ENCODE measurements at regions of chr4 and their contacts with region 1.

Region 1: DNA sequence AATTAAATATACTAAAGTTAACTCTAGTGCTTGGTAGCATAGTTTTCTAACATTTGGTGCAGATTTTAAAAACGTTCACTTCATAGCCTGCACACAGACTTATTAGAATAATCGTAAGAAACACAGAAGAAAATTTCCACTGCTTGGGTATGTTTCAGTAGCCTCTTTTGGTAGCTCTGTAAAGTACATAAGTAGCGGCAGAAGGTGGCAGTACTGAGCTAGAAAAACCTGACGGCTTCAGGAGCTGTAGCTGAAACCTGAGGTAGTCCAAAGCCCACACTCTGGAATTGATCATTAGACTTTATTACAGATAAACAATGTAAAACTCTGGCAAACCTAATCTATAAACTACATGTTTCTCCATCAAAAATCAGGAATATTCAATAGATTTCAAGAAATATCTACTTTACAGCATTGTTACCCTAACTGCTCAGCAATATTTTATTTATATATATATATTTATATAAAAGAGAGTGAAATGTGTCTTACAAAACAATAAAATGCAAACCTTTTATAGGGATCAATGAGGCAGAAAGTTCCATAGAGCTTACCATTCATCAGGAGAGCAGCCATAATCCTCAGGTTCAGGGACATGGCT is 88.2 kb downstream of the ATP8A1 start:
- DNase-seq: peak; percentile 81
- H3K4me3 Mint-ChIP-seq: no peak overlapping the region
- H3K27ac Mint-ChIP-seq: no peak overlapping the region
- H3K4me1 Mint-ChIP-seq: no peaks in the 10 kb centered on the region
- H3K27me3 Mint-ChIP-seq: no peaks in the 10 kb centered on the region

Region 2: GRCh38 chr4:42078184-42078801 is 490.4 kb before region 1 on chr4:
- CTCF ChIA-PET with region 1: no interaction called
- intact Hi-C with region 1: no loop called
- DNase-seq: no peak
- H3K4me3 Mint-ChIP-seq: no peak overlapping the region
- H3K27ac Mint-ChIP-seq: no peak overlapping the region
- H3K4me1 Mint-ChIP-seq: no peaks in the 10 kb centered on the region
- H3K27me3 Mint-ChIP-seq: no peaks in the 10 kb centered on the region

Region 3: GRCh38 chr4:42549896-42550295 is 18.8 kb before region 1 on chr4:
- CTCF ChIA-PET with region 1: no interaction called
- intact Hi-C with region 1: no loop called
- DNase-seq: no peak
- H3K4me3 Mint-ChIP-seq: no peak overlapping the region
- H3K27ac Mint-ChIP-seq: no peak overlapping the region
- H3K4me1 Mint-ChIP-seq: no peaks in the 10 kb centered on the region
- H3K27me3 Mint-ChIP-seq: no peaks in the 10 kb centered on the region

Region 4: DNA sequence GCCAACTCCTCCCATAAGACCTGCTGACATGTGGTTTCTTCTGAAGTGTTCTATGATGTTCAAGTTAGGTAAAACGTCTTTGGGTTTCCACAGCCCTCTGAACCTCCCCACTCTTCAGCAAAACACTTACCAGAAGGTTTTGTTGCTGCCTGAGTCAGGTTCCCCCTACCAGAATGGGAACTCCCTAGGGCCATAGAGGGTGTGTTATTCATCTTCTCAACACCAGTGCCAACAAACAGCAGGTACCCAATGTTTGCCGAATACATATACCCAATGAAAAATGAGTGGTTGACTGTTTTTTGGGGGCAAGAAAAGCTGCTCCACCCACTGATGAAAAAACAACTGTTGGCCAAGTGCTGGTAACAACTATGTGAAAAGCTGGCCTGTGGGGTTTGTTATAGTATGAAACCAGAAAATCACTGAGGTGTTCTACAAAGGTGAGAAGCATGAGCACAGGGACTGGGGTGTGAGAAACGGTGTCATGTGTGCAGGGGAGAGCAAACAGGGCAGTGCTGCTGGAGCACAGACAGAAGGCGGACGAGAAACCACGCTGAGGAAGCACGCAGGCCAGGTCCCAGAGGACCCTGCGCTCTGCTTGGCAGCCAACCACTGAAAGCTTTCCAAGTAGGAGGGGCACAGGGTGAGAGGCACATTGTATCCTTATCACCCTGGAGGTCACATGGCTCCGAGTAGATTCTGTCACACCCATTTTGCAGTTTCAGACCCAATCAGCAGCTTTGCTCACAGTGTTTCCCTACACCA is 59.4 kb after region 1 on chr4:
- CTCF ChIA-PET with region 1: no interaction called
- intact Hi-C with region 1: loop called (anchors 2 kb)
- DNase-seq: peak; percentile 76
- H3K4me3 Mint-ChIP-seq: peak overlapping the region; percentile 47
- H3K27ac Mint-ChIP-seq: peak overlapping the region; percentile 88
- H3K4me1 Mint-ChIP-seq: peaks cover 57% of the 10 kb centered on the region
- H3K27me3 Mint-ChIP-seq: no peaks in the 10 kb centered on the region

Region 5: DNA sequence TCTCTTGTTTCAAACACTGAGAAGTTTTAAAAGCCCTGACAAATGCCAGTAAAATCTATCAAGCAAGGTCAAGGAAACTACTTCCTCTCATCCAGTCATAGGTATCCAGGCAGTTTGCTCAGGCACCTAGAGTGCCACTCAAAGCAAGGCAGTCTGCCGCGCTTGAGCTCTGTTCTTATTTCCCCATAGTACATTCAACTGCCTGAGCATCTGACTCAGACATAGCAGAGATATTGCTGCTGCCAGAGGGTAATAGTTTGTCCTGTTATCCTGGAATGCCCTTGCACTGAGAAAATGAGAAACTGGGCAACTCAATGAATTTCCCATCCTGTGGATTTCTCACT is 104.3 kb after region 1 on chr4:
- CTCF ChIA-PET with region 1: no interaction called
- intact Hi-C with region 1: loop called (anchors 5 kb)
- DNase-seq: peak; percentile 68
- H3K4me3 Mint-ChIP-seq: peak overlapping the region; percentile 49
- H3K27ac Mint-ChIP-seq: peak overlapping the region; percentile 94
- H3K4me1 Mint-ChIP-seq: peaks cover 70% of the 10 kb centered on the region
- H3K27me3 Mint-ChIP-seq: no peaks in the 10 kb centered on the region

Region 6: GRCh38 chr4:42768125-42768748 is 199.5 kb after region 1 on chr4:
- CTCF ChIA-PET with region 1: interaction called, 6 read pairs
- intact Hi-C with region 1: loop called (anchors 1 kb)
- DNase-seq: peak; percentile 31
- H3K4me3 Mint-ChIP-seq: no peak overlapping the region
- H3K27ac Mint-ChIP-seq: no peak overlapping the region
- H3K4me1 Mint-ChIP-seq: no peaks in the 10 kb centered on the region
- H3K27me3 Mint-ChIP-seq: peaks cover 4% of the 10 kb centered on the region

Region 7: GRCh38 chr4:42865572-42866189 is 297.0 kb after region 1 on chr4:
- CTCF ChIA-PET with region 1: interaction called, 50 read pairs
- intact Hi-C with region 1: loop called (anchors 1 kb)
- DNase-seq: peak; percentile 71
- H3K4me3 Mint-ChIP-seq: no peak overlapping the region
- H3K27ac Mint-ChIP-seq: no peak overlapping the region
- H3K4me1 Mint-ChIP-seq: no peaks in the 10 kb centered on the region
- H3K27me3 Mint-ChIP-seq: peaks cover 18% of the 10 kb centered on the region

Measured in activated naive CD4-positive, alpha-beta T cell treated with anti-CD3 and anti-CD28 coated beads for 36 hours (primary cell).